B cell (primary cell): ENCODE measurements at regions of chr3 and their contacts with region 1.

Region 1: DNA sequence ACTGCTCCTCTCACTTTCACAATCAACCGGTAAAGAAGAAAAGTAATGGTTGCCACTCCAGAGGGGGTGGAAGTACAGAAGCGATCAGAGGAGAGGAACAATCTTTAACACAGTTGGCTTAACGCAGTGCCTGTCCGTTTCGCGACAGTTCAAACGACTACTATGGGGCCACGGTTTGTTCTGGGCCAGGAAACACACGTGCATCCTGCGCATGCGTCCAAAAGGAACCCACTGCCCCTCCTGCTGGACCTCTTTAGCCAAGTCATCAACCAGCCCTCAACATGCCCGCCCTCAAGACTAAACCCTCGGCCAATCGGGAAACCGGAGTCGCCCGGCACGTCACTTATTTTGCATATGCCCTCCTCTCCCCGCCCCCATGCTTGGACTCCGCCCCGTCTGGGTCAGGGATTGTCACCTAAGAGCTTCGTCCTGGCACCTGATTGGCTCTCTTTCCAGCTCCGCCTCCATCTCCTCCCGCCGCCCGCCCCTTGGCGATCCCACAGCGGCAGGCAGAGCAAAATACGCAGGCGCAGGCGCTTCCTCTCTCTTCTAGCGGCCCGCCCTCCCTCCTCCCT is 345 bp upstream of the CDV3 start:
- DNase-seq: peak; percentile 100
- ATAC-seq: peak; percentile 81
- H3K4me3 ChIP-seq: peak overlapping the region; percentile 46 to 86 (median 75)
- H3K4me3 Mint-ChIP-seq: peak overlapping the region; percentile 89
- H3K27ac ChIP-seq: peak overlapping the region; percentile 93 to 94
- H3K27ac Mint-ChIP-seq: peak overlapping the region; percentile 97
- H3K4me1 ChIP-seq: peaks cover 43 to 59% of the 10 kb centered on the region in 2 donors
- H3K4me1 Mint-ChIP-seq: peaks cover 76% of the 10 kb centered on the region
- H3K27me3 ChIP-seq: no peaks in the 10 kb centered on the region
- H3K27me3 Mint-ChIP-seq: no peaks in the 10 kb centered on the region
- CTCF ChIP-seq: no peak

Region 2: GRCh38 chr3:133426721-133427120 is 146.4 kb before region 1 on chr3:
- CTCF ChIA-PET with region 1: interaction called, 16 read pairs
- POLR2A ChIA-PET with region 1: interaction called, 12 read pairs
- intact Hi-C with region 1: loop called (anchors 2 kb)
- DNase-seq: no peak
- ATAC-seq: no peak
- H3K4me3 ChIP-seq: no peak overlapping the region
- H3K4me3 Mint-ChIP-seq: no peak overlapping the region
- H3K27ac ChIP-seq: no peak overlapping the region
- H3K27ac Mint-ChIP-seq: no peak overlapping the region
- H3K4me1 ChIP-seq: peaks cover 0 to 16% of the 10 kb centered on the region in 2 donors
- H3K4me1 Mint-ChIP-seq: peaks cover 13% of the 10 kb centered on the region
- H3K27me3 ChIP-seq: peaks cover 0 to 8% (median 2%) of the 10 kb centered on the region in 4 experiments
- H3K27me3 Mint-ChIP-seq: peaks cover 3% of the 10 kb centered on the region
- CTCF ChIP-seq: no peak

Region 3: DNA sequence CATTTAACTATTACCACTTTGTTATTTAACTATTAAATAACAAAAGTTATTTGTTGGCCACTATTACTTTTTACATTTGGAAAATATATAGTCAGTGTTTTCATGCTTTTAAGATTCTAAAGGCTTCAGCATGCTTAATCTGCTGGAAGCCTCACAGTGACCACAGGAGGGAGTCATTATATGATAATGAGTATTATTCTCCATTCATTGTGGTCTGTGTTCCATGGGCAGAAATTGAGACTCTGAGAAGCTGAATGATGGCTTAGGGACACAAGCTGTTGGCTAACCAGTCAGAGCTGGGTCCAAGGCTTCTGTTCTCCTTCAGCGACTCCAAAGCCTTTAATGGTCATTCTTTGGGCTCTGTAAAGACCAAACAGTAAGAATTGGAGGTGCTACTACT is 108.6 kb before region 1 on chr3:
- CTCF ChIA-PET with region 1: interaction called, 81 read pairs
- POLR2A ChIA-PET with region 1: interaction called, 14 read pairs
- intact Hi-C with region 1: loop called (anchors 2 kb)
- DNase-seq: no peak
- ATAC-seq: no peak
- H3K4me3 ChIP-seq: no peak overlapping the region
- H3K4me3 Mint-ChIP-seq: no peak overlapping the region
- H3K27ac ChIP-seq: no peak overlapping the region
- H3K27ac Mint-ChIP-seq: peak overlapping the region; percentile 41
- H3K4me1 ChIP-seq: peaks cover 53 to 62% of the 10 kb centered on the region in 2 donors
- H3K4me1 Mint-ChIP-seq: peaks cover 61% of the 10 kb centered on the region
- H3K27me3 ChIP-seq: no peaks in the 10 kb centered on the region
- H3K27me3 Mint-ChIP-seq: no peaks in the 10 kb centered on the region
- CTCF ChIP-seq: peak; percentile 37

Region 4: GRCh38 chr3:133487920-133488540 is 85.1 kb before region 1 on chr3:
- CTCF ChIA-PET with region 1: interaction called, 71 read pairs
- POLR2A ChIA-PET with region 1: interaction called, 13 read pairs
- intact Hi-C with region 1: loop called (anchors 1 kb)
- DNase-seq: peak; percentile 67
- ATAC-seq: no peak
- H3K4me3 ChIP-seq: no peak overlapping the region
- H3K4me3 Mint-ChIP-seq: no peak overlapping the region
- H3K27ac ChIP-seq: no peak overlapping the region
- H3K27ac Mint-ChIP-seq: peak overlapping the region; percentile 41
- H3K4me1 ChIP-seq: peaks cover 24 to 37% of the 10 kb centered on the region in 2 donors
- H3K4me1 Mint-ChIP-seq: peaks cover 49% of the 10 kb centered on the region
- H3K27me3 ChIP-seq: no peaks in the 10 kb centered on the region
- H3K27me3 Mint-ChIP-seq: no peaks in the 10 kb centered on the region
- CTCF ChIP-seq: peak; percentile 66

Region 5: DNA sequence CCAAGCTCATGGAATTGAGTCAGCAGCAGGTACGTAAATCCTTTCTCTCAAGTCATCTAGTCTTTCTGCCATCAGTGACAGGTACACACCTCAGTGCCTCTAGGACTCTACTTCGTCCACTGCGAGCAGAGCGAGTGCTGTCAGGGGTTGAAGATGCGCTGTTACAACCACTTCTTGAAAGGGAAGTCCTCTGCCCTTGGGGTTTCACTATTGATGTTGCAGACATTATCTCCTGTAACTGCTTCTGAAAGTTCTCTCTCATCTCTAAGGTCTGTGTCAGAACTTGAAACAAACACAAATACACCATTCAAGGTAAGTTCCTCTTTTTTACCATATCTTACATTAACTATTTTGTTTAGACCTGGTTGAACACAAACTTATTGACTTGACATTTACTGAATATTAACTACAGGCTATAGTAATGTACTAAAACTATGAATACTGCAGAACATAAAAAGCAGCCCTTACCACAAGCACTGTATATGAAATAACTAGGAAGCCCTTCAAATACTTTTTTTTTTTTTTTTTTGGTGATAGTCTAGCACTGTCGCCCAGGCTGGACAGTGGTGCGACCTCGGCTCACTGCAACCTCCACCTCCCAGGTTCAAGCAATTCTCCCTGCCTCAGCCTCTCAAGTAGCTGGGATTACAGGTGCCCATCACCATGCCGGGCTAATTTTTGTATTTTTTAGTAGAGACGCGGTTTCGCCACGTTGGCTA is 47.1 kb after region 1 on chr3:
- CTCF ChIA-PET with region 1: interaction called, 4 read pairs
- POLR2A ChIA-PET with region 1: no interaction called
- intact Hi-C with region 1: loop called (anchors 5 kb)
- DNase-seq: peak; percentile 77
- ATAC-seq: peak; percentile 97
- H3K4me3 ChIP-seq: no peak overlapping the region
- H3K4me3 Mint-ChIP-seq: peak overlapping the region; percentile 52
- H3K27ac ChIP-seq: peak overlapping the region; percentile 33 to 59
- H3K27ac Mint-ChIP-seq: peak overlapping the region; percentile 83
- H3K4me1 ChIP-seq: peaks cover 0 to 12% of the 10 kb centered on the region in 2 donors
- H3K4me1 Mint-ChIP-seq: peaks cover 13% of the 10 kb centered on the region
- H3K27me3 ChIP-seq: no peaks in the 10 kb centered on the region
- H3K27me3 Mint-ChIP-seq: no peaks in the 10 kb centered on the region
- CTCF ChIP-seq: no peak

Region 6: GRCh38 chr3:133805527-133806475 is 232.7 kb after region 1 on chr3 and contains the start of gene SRPRB:
- CTCF ChIA-PET with region 1: interaction called, 4 read pairs
- POLR2A ChIA-PET with region 1: no interaction called
- intact Hi-C with region 1: loop called (anchors 1 kb)
- DNase-seq: peak; percentile 95
- ATAC-seq: peak; percentile 98
- H3K4me3 ChIP-seq: peak within 1 kb of the TSS; percentile 56 to 95 (median 87)
- H3K4me3 Mint-ChIP-seq: peak within 1 kb of the TSS; percentile 99
- H3K27ac ChIP-seq: peak within 1 kb of the TSS; percentile 75 to 80
- H3K27ac Mint-ChIP-seq: peak within 1 kb of the TSS; percentile 94
- H3K4me1 ChIP-seq: peaks cover 11 to 13% of the 10 kb centered on the region in 2 donors
- H3K4me1 Mint-ChIP-seq: peaks cover 18% of the 10 kb centered on the region
- H3K27me3 ChIP-seq: no peaks in the 10 kb centered on the region
- H3K27me3 Mint-ChIP-seq: no peaks in the 10 kb centered on the region
- CTCF ChIP-seq: no peak
- total RNA-seq, gene SRPRB: 28.8 and 29.7 TPM in 2 replicates

Region 7: DNA sequence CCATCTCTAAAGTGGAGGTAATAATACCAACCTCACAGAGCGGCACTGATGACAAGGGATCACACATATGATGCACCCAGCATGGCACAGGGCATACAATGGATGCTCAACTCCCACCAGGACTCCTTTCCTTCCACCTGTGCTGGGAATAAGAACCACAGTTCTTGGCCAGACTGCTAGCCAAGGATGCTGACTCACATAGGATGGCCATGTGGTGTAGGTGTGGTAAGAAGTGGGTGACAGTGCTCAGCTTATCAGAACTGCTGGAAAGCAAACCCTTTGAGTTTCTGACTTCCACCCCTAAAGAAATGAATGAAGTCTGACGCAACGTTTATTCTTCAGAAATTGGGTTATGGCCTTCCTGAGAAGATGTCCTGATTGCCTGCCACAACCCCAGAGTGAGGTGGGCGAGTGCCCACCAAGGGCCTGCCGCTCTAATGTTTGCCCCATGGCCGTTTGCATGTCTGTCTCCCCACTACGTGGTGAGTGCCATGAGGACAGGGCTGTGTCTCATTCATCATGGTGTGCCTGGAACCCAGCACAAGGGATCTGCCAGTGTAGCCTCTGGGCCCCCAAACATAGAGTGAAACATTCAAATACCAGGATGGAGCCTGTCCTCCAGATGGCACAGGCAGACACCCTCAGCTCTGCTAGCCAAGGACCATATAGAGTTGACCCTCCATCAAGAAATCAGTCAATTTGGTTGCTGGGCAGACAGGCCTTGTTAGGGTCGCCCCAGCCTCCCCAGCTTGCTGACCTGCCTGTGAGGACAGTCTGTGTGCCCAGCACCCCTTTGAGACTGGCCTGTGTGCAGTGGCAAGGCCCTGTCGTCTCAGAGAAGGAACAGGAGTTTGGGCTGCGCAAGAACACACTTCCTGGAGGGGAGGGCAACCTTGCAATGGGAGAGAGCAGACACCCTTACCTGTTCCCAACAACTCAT is 514.2 kb after region 1 on chr3:
- CTCF ChIA-PET with region 1: no interaction called
- POLR2A ChIA-PET with region 1: no interaction called
- intact Hi-C with region 1: no loop called
- DNase-seq: no peak
- ATAC-seq: no peak
- H3K4me3 ChIP-seq: no peak overlapping the region
- H3K4me3 Mint-ChIP-seq: no peak overlapping the region
- H3K27ac ChIP-seq: no peak overlapping the region
- H3K27ac Mint-ChIP-seq: no peak overlapping the region
- H3K4me1 ChIP-seq: no peaks in the 10 kb centered on the region
- H3K4me1 Mint-ChIP-seq: no peaks in the 10 kb centered on the region
- H3K27me3 ChIP-seq: no peaks in the 10 kb centered on the region
- H3K27me3 Mint-ChIP-seq: peaks cover 3% of the 10 kb centered on the region
- CTCF ChIP-seq: no peak

Region 8: GRCh38 chr3:134485718-134486576 is 912.8 kb after region 1 on chr3 and contains the starts of genes ANAPC13 and CEP63:
- CTCF ChIA-PET with region 1: no interaction called
- POLR2A ChIA-PET with region 1: interaction called, 11 read pairs
- intact Hi-C with region 1: no loop called
- DNase-seq: peak; percentile 98
- ATAC-seq: peak; percentile 81
- H3K4me3 ChIP-seq: peak within 1 kb of the TSS; percentile 74 to 98 (median 95)
- H3K4me3 Mint-ChIP-seq: peak within 1 kb of the TSS; percentile 100
- H3K27ac ChIP-seq: peak within 1 kb of the TSS; percentile 78 to 89
- H3K27ac Mint-ChIP-seq: peak within 1 kb of the TSS; percentile 100
- H3K4me1 ChIP-seq: peaks cover 23 to 40% of the 10 kb centered on the region in 2 donors
- H3K4me1 Mint-ChIP-seq: peaks cover 45% of the 10 kb centered on the region
- H3K27me3 ChIP-seq: no peaks in the 10 kb centered on the region
- H3K27me3 Mint-ChIP-seq: no peaks in the 10 kb centered on the region
- CTCF ChIP-seq: no peak
- total RNA-seq, gene ANAPC13: 26.7 and 29.3 TPM in 2 replicates
- total RNA-seq, gene CEP63: 35.5 and 35.6 TPM in 2 replicates